ENCODE measurements at regions of chr20 and their contacts with region 1.

Region 1: GRCh38 chr20:17995967-17996819 is 27.4 kb downstream of the MGME1 start:
- DNase-seq: peak; percentile 39 to 63 (median 50)
- H3K4me3 ChIP-seq: no peak overlapping the region
- H3K4me3 Mint-ChIP-seq: no peak overlapping the region
- H3K27ac ChIP-seq: no peak overlapping the region
- H3K27ac Mint-ChIP-seq: no peak overlapping the region
- H3K4me1 ChIP-seq: no peaks in the 10 kb centered on the region
- H3K4me1 Mint-ChIP-seq: peaks cover 6% of the 10 kb centered on the region
- H3K27me3 ChIP-seq: no peaks in the 10 kb centered on the region
- H3K27me3 Mint-ChIP-seq: peaks cover 0 to 1% (median 1%) of the 10 kb centered on the region in 3 donors
- CTCF ChIP-seq: peak; percentile 97

Region 2: GRCh38 chr20:17960927-17961586 is 35.1 kb before region 1 on chr20:
- intact Hi-C with region 1: loop called in 1 of 2 experiments (anchors 5 kb)
- DNase-seq: peak in 2 of 3 donors; percentile 36 to 55
- H3K4me3 ChIP-seq: no peak overlapping the region
- H3K4me3 Mint-ChIP-seq: no peak overlapping the region
- H3K27ac ChIP-seq: peak overlapping the region in 1 of 2 donors; percentile 58
- H3K27ac Mint-ChIP-seq: peak overlapping the region; percentile 10 to 97 (median 73)
- H3K4me1 ChIP-seq: peaks cover 55 to 60% of the 10 kb centered on the region in 2 donors
- H3K4me1 Mint-ChIP-seq: peaks cover 78% of the 10 kb centered on the region
- H3K27me3 ChIP-seq: no peaks in the 10 kb centered on the region
- H3K27me3 Mint-ChIP-seq: no peaks in the 10 kb centered on the region
- CTCF ChIP-seq: no peak

Measured in CD14-positive monocyte (primary cell).